Activated CD4-positive, alpha-beta memory T cell treated with anti-CD3 and anti-CD28 coated beads for 36 hours (primary cell): ENCODE measurements at regions of chr7 and their contacts with region 1.

Region 1: GRCh38 chr7:54788664-54789063 is 29.7 kb upstream of the SEC61G start:
- DNase-seq: peak; percentile 57
- H3K4me3 Mint-ChIP-seq: no peak overlapping the region
- H3K27ac Mint-ChIP-seq: no peak overlapping the region
- H3K4me1 Mint-ChIP-seq: peaks cover 5% of the 10 kb centered on the region
- H3K27me3 Mint-ChIP-seq: peaks cover 44% of the 10 kb centered on the region

Region 2: DNA sequence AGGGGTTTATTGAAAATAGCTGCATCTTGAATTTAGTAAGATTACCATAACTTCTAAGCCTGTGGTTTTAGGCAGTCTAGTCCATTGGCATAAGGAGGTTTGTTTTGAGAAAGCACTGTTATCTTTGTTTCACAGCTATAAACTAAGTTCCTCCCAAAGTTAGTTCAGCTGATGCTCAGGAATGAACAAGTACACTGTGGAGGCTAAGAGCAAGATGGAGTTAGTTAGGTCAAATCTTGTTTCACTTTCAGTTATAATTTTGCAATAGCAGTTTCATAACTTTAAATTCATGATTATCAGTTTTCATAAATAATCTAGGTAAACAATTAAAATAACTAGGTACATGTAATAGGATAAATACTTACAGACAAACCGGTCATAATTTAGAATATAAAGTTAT is 45.1 kb before region 1 on chr7:
- CTCF ChIA-PET with region 1: no interaction called
- POLR2A ChIA-PET with region 1: no interaction called
- intact Hi-C with region 1: no loop called
- DNase-seq: no peak
- H3K4me3 Mint-ChIP-seq: no peak overlapping the region
- H3K27ac Mint-ChIP-seq: no peak overlapping the region
- H3K4me1 Mint-ChIP-seq: no peaks in the 10 kb centered on the region
- H3K27me3 Mint-ChIP-seq: no peaks in the 10 kb centered on the region

Region 3: GRCh38 chr7:54839538-54840213 is 51.0 kb after region 1 on chr7:
- CTCF ChIA-PET with region 1: interaction called, 3 read pairs
- POLR2A ChIA-PET with region 1: no interaction called
- intact Hi-C with region 1: loop called (anchors 2 kb)
- DNase-seq: peak; percentile 22
- H3K4me3 Mint-ChIP-seq: no peak overlapping the region
- H3K27ac Mint-ChIP-seq: no peak overlapping the region
- H3K4me1 Mint-ChIP-seq: peaks cover 3% of the 10 kb centered on the region
- H3K27me3 Mint-ChIP-seq: peaks cover 3% of the 10 kb centered on the region

Region 4: DNA sequence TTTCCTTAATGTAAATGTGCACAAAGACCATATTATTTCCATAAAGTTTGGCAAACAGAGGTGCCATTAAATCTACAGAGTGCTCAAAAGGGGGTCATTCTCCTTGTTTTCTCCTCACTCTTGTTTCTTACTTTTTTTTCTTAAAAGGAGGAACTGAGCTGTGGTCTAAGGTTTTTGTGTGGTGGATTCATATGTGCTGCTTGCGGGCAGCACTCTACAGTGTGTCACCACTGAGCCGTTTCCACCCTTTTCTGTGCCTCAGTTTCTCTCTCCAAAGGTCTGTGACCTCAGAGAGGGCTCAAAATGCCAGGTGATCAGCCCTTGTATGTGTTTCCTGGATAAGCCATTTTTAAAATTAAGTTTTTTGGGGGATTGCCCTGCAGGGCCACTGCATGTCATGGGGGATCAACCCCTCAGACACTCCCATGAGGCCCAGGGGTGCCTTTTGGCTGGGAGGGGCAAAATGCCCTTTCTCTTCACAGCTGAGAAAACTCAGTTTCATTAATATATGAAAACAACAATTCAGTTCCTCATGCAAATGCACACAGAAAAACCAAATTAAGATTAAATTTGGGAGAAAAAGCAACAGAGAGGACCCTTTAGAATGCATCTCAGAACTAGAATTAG is 840.5 kb after region 1 on chr7:
- CTCF ChIA-PET with region 1: no interaction called
- POLR2A ChIA-PET with region 1: no interaction called
- intact Hi-C with region 1: no loop called
- DNase-seq: no peak
- H3K4me3 Mint-ChIP-seq: no peak overlapping the region
- H3K27ac Mint-ChIP-seq: no peak overlapping the region
- H3K4me1 Mint-ChIP-seq: no peaks in the 10 kb centered on the region
- H3K27me3 Mint-ChIP-seq: peaks cover 17% of the 10 kb centered on the region